HepG2 (cell line): ENCODE measurements at regions of chr20 and their contacts with region 1.

Region 1: GRCh38 chr20:32582659-32583580 is 2.2 kb downstream of the NOL4L start:
- DNase-seq: no peak
- ATAC-seq: peak; percentile 16
- H3K4me3 ChIP-seq: peak overlapping the region; percentile 65 to 97 (median 70)
- H3K27ac ChIP-seq: peak overlapping the region; percentile 84
- H3K4me1 ChIP-seq: peaks cover 44% of the 10 kb centered on the region
- H3K27me3 ChIP-seq: peaks cover 11 to 25% of the 10 kb centered on the region in 2 experiments; a peak in 4 of 5 replicates
- CTCF ChIP-seq: peak; percentile 2; the same call in 1 of the 2 replicates
- EP300 ChIP-seq: no peak; a peak in 1 of 4 replicates
- POLR2A ChIP-seq: peak in 1 of 2 experiments; percentile 62; a peak in 2 of 4 replicates
- RAD21 ChIP-seq: 0 out of 2 replicates have a peak, but pooled peaks have one; percentile 44

Region 2: GRCh38 chr20:32189691-32190615 is 393.0 kb before region 1 on chr20:
- CTCF ChIA-PET with region 1: no interaction called
- POLR2A ChIA-PET with region 1: no interaction called
- in situ Hi-C with region 1: no loop called
- intact Hi-C with region 1: no loop called
- DNase-seq: no peak
- ATAC-seq: peak; percentile 2; the same call in 1 of the 3 replicates
- H3K4me3 ChIP-seq: no peak overlapping the region
- H3K27ac ChIP-seq: no peak overlapping the region
- H3K4me1 ChIP-seq: peaks cover 24% of the 10 kb centered on the region
- H3K27me3 ChIP-seq: no peaks in the 10 kb centered on the region
- CTCF ChIP-seq: no peak
- EP300 ChIP-seq: no peak
- POLR2A ChIP-seq: peak in 1 of 2 experiments; percentile 7; a peak in 2 of 4 replicates
- RAD21 ChIP-seq: no peak

Region 3: DNA sequence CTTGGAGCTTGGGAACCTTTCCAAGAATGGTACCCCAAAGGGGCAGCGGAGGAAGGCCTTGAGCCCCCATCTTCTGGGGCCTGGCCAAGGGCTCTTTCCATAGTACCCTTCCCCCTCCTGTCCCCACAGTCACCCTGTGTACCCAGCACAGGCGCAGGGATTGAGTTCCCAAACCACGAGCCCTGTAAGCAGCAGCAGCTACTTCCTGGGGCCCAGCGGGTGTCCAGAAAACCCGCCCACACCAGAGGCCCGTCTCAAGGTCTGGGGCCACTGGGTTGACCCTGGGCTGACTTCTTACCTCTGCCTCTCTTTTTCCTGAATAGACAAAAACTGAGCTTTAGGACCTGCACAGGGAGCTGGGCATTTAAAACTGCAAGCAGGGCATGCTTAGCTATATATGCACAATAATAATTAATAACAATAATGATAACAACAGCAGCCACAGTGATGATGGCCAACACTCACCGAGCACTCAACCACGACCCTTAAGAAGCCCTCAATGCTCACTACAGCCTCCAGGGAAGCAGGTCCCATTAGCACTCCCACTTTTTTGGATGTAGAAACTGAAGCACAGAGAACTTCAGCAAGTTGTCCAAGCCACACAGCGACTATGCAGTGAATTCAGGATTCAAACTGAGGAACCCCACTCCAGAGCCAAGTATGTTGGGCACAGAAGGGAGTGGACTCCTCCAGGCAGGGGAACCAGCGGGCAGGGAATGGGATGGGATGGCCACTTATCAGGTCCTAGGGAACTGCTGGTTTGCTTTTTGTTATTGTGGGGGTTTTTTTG is 12.3 kb before region 1 on chr20:
- CTCF ChIA-PET with region 1: no interaction called
- POLR2A ChIA-PET with region 1: interaction called, 16 read pairs
- in situ Hi-C with region 1: no loop called
- intact Hi-C with region 1: no loop called
- DNase-seq: no peak
- ATAC-seq: peak; percentile 6; the same call in 2 of the 3 replicates
- H3K4me3 ChIP-seq: no peak overlapping the region
- H3K27ac ChIP-seq: no peak overlapping the region
- H3K4me1 ChIP-seq: peaks cover 87% of the 10 kb centered on the region
- H3K27me3 ChIP-seq: no peaks in the 10 kb centered on the region; a peak in 1 of 5 replicates
- CTCF ChIP-seq: no peak
- EP300 ChIP-seq: peak in 1 of 2 experiments; percentile 50; a peak in 2 of 4 replicates
- POLR2A ChIP-seq: no peak
- RAD21 ChIP-seq: no peak